Breast epithelium (tissue), 4 donors: ENCODE measurements at regions of chr16 and their contacts with region 1.

Region 1: DNA sequence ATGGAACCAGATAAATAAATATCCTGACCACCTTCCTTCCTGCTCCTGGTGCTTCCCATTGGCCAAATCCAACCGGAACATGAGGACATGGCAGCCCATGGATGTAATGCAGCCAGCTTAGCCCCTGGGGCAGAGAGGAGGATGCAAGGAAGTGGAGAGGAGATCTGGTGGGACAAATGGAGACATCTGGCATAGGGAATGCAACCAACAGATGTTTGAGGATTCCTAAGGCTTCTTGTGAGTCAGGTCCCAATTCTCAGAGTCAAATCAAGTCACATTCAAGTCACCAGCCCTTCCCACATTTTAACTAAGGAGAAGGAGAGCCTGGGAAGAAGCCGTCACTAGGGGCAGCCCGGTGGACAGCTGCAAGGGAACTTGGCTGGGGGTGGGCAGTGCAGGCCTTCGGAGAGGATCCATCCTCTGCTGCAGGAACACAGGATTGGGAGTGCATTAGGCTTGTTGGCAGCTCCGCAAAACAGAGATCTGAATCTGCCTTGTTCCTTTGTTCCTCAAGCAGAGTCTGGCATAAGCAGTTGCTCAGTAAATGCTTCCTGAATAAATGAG is 62.8 kb upstream of the HS3ST2 start:
- DNase-seq: no peak
- H3K4me3 ChIP-seq: no peak overlapping the region
- H3K27ac ChIP-seq: no peak overlapping the region
- H3K4me1 ChIP-seq: no peaks in the 10 kb centered on the region
- H3K27me3 ChIP-seq: peaks cover 0 to 2% of the 10 kb centered on the region in 2 donors
- CTCF ChIP-seq: no peak
- POLR2A ChIP-seq: no peak

Region 2: GRCh38 chr16:21584817-21585216 is 1166.4 kb before region 1 on chr16:
- intact Hi-C with region 1: loop called (anchors 5 kb)
- DNase-seq: no peak
- H3K4me3 ChIP-seq: no peak overlapping the region
- H3K27ac ChIP-seq: no peak overlapping the region
- H3K4me1 ChIP-seq: no peaks in the 10 kb centered on the region
- H3K27me3 ChIP-seq: no peaks in the 10 kb centered on the region
- CTCF ChIP-seq: no peak
- POLR2A ChIP-seq: no peak

Region 3: DNA sequence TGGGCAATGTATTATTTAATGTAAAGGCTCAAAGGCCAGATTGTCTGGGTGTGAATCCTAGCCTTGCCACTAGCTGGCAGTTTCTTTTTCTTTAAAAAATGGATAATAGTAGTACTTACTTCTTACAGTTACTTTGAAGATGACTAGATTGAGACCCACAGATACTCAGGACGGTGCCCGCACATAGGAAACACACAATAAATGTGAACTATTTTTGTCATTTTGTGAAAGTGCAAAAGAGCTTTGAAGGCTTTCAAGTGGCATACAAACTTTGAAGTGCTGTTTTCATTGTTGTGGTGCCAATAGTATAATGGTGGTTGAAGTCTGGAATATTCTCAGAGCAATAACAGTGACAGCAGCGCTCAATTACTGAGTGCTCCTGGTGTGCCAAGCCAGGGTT is 1023.8 kb before region 1 on chr16:
- intact Hi-C with region 1: no loop called
- DNase-seq: no peak
- H3K4me3 ChIP-seq: no peak overlapping the region
- H3K27ac ChIP-seq: no peak overlapping the region
- H3K4me1 ChIP-seq: no peaks in the 10 kb centered on the region
- H3K27me3 ChIP-seq: no peaks in the 10 kb centered on the region
- CTCF ChIP-seq: no peak
- POLR2A ChIP-seq: no peak